Ascending aorta (tissue), 2 donors: ENCODE measurements at regions of chr9 and their contacts with region 1.

Region 1: DNA sequence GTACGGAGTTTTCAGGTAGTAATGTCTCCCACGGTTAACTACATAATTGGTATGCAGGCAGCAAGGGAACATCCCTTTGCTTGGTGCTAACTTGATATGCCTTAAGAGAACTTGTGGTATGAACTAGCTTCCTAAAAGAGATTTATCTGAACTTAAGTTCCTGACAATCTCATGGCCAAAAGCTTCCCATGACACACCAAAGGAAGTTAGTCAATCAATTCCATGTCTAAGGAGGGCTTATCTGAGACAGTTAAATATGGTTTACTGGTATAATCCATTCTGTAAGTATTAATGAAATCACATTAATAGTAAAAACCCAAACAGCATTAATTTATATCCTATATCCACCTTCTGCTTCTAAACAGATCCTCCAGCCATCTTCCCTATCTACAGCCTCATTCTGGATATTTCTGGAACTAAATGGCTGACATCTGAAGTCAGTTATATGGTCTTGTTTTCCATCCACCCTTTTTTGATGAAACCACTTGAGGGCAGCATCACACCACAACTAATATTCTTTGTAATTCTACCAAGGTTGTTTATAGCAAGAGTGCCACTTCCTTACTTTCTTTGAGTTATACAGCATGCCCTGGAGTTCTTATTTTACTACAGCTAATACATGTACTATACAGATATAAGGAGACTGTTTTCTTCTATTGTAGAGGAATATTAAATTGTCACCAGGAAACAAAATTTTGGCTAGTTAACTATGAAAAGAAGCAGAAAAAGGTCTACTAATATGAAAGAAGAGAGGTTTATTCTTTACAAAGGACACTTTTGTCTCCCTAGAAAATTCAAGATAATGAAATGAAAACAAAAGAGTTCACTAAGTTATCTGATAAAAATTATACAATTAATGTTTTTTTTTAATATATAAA is 34.7 kb downstream of the SHOC1 start:
- DNase-seq: no peak
- H3K4me3 ChIP-seq: no peak overlapping the region
- H3K27ac ChIP-seq: no peak overlapping the region
- H3K4me1 ChIP-seq: no peaks in the 10 kb centered on the region
- H3K27me3 ChIP-seq: no peaks in the 10 kb centered on the region
- CTCF ChIP-seq: peak; percentile 46 to 66 (median 48)

Region 2: DNA sequence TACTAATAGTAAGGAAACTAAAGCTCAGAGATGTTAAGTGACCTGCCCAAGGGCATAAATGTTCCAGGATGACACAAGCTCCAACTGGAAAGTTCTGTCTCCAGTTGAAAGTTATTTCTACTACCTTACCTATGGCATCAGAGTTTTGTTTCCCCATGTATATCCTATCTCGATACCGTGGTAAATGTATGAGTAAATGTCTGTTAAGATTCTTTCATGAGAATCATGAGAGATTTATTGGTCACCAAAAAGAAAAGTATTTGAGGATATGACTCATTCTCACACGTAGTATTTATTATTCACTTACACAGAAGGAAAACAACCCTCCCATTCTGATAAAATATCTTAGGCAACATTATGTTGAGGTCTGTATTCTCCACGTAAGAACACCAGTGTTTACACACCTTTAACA is 45.8 kb after region 1 on chr9:
- intact Hi-C with region 1: no loop called
- DNase-seq: no peak
- H3K4me3 ChIP-seq: no peak overlapping the region
- H3K27ac ChIP-seq: no peak overlapping the region
- H3K4me1 ChIP-seq: no peaks in the 10 kb centered on the region
- H3K27me3 ChIP-seq: no peaks in the 10 kb centered on the region
- CTCF ChIP-seq: no peak

Region 3: DNA sequence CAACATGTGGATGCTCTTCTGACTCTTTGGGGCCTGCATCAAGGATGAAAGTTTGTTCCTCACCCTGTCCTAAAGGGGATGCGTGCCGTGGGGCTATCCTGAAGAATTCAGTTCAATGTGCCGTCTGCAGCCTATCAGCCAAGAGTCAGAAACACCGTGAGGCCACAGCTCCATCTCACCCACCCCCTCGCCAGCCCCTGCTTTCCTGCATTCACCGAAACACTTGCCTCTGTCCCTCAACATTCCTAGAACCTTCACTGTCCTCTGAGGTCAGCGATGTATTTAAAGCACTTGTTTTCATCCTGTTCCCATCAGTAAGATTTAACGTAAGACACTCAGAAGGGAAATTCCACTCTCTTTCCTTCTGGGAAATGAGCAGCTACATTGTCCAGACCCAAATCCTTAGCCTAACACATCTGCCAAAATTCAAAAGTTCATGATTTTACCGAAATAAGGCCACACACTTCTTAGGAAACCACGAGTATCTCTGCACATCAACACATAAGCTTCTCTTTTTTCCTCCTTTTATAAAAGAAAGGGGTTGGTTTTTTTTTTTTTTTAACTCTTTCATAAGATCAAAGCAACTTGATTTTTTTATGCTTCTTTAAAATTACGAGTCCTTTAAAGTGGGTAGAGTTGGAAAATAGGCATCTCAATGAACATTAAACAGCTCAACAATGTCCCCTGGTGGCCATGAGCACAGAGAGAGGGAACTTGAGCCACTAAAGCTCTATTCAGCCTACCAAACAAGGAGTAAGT is 314.4 kb after region 1 on chr9:
- intact Hi-C with region 1: loop called (anchors 1 kb)
- DNase-seq: peak in 1 of 2 donors; percentile 82
- H3K4me3 ChIP-seq: peak overlapping the region in 1 of 2 donors; percentile 21
- H3K27ac ChIP-seq: peak overlapping the region; percentile 54 to 65
- H3K4me1 ChIP-seq: no peaks in the 10 kb centered on the region
- H3K27me3 ChIP-seq: no peaks in the 10 kb centered on the region
- CTCF ChIP-seq: peak; percentile 89 to 94 (median 91)

Region 4: DNA sequence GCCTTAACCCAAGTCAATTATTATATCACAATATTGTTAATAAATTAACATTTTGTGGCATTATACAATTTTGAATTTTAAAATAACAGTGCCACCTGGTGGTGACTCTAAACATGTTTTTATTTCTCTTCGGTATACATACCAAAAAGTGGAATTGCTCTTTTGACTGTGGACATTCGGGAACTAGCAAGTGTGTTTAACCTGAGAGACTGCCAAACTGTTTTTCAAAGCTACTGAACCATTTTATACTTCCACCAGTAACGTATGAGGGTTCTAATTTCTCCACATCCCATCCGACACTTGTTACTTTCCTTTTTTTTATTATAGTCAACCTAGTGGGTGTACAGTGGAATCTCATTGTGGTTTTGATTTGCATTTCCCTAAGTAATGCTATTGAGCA is 601.6 kb after region 1 on chr9:
- intact Hi-C with region 1: loop called (anchors 10 kb)
- DNase-seq: no peak
- H3K4me3 ChIP-seq: no peak overlapping the region
- H3K27ac ChIP-seq: no peak overlapping the region
- H3K4me1 ChIP-seq: peaks cover 3 to 4% of the 10 kb centered on the region in 2 donors
- H3K27me3 ChIP-seq: no peaks in the 10 kb centered on the region
- CTCF ChIP-seq: peak; percentile 50 to 61 (median 54)